Tibial artery (tissue), 4 donors: ENCODE measurements at regions of chr22 and their contacts with region 1.

Region 1: GRCh38 chr22:24423519-24424000 is 3.8 kb upstream of the ADORA2A start:
- DNase-seq: no peak
- H3K4me3 ChIP-seq: peak overlapping the region; percentile 54 to 68
- H3K27ac ChIP-seq: no peak overlapping the region
- H3K4me1 ChIP-seq: peaks cover 0 to 44% (median 24%) of the 10 kb centered on the region in 4 donors
- H3K27me3 ChIP-seq: peaks cover 0 to 2% of the 10 kb centered on the region in 2 donors
- CTCF ChIP-seq: peak; percentile 87 to 89

Region 2: DNA sequence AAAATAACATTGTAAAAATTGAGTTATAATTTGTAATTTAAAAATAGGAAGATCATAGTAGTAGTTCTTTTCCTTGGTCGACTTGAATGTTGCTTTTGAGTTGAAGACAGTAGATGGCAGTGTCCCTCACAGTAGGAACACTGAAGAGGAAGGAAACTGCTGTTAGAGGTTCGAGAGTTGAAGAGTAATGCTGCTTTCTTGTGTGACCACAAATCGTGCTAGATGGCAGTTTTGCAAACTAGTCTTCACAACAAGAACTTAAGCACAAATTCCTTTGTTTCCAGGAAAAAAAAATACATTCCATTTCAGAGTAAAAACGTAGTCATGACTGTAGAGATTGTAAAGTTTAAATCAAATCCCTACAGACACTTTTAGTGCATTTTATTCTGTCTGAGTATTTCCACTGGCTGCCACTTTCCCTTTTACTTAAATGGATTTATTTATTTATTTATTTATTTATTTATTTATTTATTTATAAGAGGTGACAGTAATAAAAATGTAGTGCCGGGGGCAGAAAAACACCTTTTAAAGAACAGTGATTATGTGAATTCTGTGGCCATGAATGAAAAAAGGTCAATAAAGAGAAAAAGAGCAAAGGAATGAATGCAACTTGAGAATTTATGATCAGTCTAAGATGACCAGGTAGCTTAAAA is 98.3 kb before region 1 on chr22:
- intact Hi-C with region 1: loop called (anchors 10 kb)
- DNase-seq: no peak
- H3K4me3 ChIP-seq: no peak overlapping the region
- H3K27ac ChIP-seq: peak overlapping the region in 1 of 2 donors; percentile 3
- H3K4me1 ChIP-seq: peaks cover 0 to 24% (median 8%) of the 10 kb centered on the region in 4 donors
- H3K27me3 ChIP-seq: no peaks in the 10 kb centered on the region
- CTCF ChIP-seq: peak; percentile 62 to 63

Region 3: GRCh38 chr22:24494528-24495364 is 71.2 kb after region 1 on chr22 and contains the start of gene UPB1:
- intact Hi-C with region 1: loop called (anchors 5 kb)
- DNase-seq: no peak
- H3K4me3 ChIP-seq: peak within 1 kb of the TSS in 1 of 2 donors; percentile 19
- H3K27ac ChIP-seq: no peak within 1 kb of the TSS
- H3K4me1 ChIP-seq: peaks cover 0 to 10% (median 5%) of the 10 kb centered on the region in 4 donors
- H3K27me3 ChIP-seq: peaks cover 0 to 13% of the 10 kb centered on the region in 2 donors
- CTCF ChIP-seq: no peak